ENCODE measurements at regions of chr7 and their contacts with region 1.

Region 1: DNA sequence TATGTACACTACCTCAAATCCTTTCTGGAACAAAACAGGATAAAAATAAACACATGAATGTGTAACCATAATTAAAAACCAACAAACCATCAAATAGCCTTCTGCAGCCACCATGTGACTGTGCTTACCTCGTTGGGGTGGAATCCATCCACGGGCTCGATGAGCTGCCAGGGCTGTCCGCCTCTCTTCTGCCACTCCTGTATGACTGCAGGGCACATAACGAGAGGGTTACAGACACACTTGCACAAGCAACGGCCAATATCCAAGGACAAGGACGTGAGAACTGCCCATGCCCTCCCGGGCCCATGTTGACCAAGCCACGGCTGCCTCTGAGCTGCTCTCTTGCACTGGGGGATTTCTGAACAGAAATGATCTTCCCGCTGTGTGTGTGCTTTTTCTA is 132.2 kb downstream of the ANLN start:
- DNase-seq: no peak
- H3K4me3 ChIP-seq: no peak overlapping the region
- H3K27ac ChIP-seq: no peak overlapping the region
- H3K4me1 ChIP-seq: peaks cover 0 to 10% (median 8%) of the 10 kb centered on the region in 4 experiments
- H3K27me3 ChIP-seq: no peaks in the 10 kb centered on the region

Region 2: GRCh38 chr7:36415144-36415543 is 106.8 kb before region 1 on chr7:
- CTCF ChIA-PET with region 1: no interaction called
- POLR2A ChIA-PET with region 1: no interaction called
- DNase-seq: no peak
- H3K4me3 ChIP-seq: no peak overlapping the region
- H3K27ac ChIP-seq: no peak overlapping the region
- H3K4me1 ChIP-seq: no peaks in the 10 kb centered on the region
- H3K27me3 ChIP-seq: no peaks in the 10 kb centered on the region

Region 3: DNA sequence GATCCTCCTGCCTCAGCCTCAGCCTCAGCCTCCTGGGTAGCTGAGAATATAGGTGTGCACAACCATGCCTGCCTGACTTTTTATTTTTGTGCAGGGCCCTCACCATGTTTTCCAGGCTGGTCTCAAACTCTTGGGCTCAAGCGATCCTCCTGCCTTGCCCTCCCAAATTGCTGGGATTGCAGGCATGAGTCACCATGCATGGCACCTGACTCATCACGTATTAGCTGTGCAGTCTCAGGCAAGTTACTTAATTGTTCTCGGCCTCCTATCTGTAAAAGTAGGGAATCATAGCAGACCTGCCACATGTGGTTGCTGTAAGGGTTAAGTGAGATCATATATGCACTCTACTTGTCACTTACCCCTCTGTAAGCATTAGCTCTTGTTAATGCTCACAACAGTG is 15.1 kb before region 1 on chr7:
- CTCF ChIA-PET with region 1: interaction called, 10 read pairs
- POLR2A ChIA-PET with region 1: no interaction called
- DNase-seq: no peak
- H3K4me3 ChIP-seq: no peak overlapping the region
- H3K27ac ChIP-seq: no peak overlapping the region
- H3K4me1 ChIP-seq: no peaks in the 10 kb centered on the region
- H3K27me3 ChIP-seq: no peaks in the 10 kb centered on the region

Region 4: DNA sequence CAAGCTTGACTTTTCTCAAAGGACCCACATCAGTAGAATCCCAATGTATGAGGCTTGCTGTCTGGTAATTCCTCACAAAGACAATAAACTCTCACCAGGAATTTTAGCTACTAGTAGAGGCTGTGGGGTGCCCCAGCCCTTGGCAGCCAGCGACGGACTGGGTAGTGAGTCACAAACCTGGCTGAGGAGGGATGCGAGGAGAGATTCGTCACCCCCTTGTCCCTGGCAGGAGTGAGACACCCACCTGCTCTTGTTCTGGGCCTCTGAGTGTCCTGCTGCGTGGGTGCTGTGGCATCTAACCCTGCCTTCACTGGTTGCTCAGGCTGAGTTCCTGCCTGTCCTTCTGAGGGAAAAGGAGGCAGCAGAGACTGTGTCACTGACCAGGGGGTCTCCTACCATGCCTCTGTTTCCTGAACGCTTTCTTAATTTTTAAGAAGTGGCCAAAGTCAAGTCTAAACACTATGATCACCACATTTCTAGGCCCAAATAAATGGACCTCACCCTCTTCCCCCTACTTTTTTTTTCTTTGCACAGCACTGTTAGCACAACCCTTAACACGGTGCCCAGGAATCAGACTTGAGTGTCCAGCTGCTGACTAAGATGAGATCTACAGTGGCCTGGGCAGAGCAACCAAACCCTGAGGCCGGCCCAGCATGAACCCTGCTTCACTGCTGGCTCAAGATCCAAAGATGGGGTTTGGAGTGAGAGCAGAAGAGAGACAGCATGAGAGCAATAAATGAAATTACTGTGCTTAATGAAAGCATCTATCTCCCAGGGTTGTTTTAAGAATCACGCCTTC is 14.2 kb after region 1 on chr7:
- CTCF ChIA-PET with region 1: no interaction called
- POLR2A ChIA-PET with region 1: no interaction called
- DNase-seq: no peak
- H3K4me3 ChIP-seq: no peak overlapping the region
- H3K27ac ChIP-seq: no peak overlapping the region
- H3K4me1 ChIP-seq: no peaks in the 10 kb centered on the region
- H3K27me3 ChIP-seq: no peaks in the 10 kb centered on the region

Region 5: GRCh38 chr7:37211097-37211880 is 689.4 kb after region 1 on chr7:
- CTCF ChIA-PET with region 1: no interaction called
- POLR2A ChIA-PET with region 1: no interaction called
- DNase-seq: no peak
- H3K4me3 ChIP-seq: no peak overlapping the region
- H3K27ac ChIP-seq: no peak overlapping the region
- H3K4me1 ChIP-seq: peaks cover 3 to 39% (median 34%) of the 10 kb centered on the region in 4 experiments
- H3K27me3 ChIP-seq: no peaks in the 10 kb centered on the region

Measured in common myeloid progenitor, CD34-positive (primary cell).